ENCODE measurements at regions of chr7 and their contacts with region 1.

Region 1: DNA sequence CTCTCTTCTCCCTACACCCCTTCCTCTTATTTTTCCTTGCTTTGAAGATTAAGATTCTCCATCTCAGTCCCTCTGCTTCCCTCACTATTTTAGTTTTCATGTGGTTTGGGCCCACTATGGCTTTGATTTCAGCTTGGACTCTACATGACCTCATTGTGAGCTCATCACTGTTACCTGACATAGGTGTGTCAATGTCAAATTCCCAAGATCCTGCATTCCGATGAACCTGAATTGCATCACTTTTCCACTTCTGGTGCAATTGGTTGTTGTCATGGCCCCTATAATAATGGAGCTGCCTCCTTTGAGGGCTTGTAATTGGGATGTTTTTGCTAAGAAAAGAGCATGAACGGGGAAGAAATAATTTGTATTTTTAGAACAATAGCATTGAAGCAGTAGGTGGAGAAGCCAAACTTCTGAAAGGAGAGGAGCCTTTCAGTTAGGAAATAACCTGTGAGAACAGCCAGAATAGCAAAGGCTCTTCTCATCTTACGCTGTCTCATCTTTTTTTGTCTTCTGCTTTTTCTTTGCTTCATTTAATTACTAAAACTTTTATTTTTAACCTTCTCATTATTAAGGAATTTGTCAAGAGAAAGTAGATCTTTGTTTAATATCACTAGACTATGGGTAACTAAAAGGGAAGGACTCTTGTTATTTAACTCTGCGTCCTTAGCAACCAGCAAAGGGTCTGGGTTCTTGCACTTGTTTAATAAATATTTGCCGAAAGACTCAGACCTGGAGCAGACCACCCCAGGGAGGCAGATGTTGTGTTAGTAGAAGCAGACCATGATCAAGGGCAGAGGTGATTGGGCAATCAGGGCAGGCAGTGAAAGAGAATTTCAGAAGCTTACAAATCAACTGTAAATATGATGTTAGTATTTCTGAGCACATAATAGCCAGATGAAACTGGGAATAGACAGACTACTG is 95.4 kb downstream of the TES start:
- DNase-seq: no peak
- ATAC-seq: no peak
- H3K4me3 ChIP-seq: no peak overlapping the region
- H3K4me3 Mint-ChIP-seq: no peak overlapping the region
- H3K27ac ChIP-seq: no peak overlapping the region
- H3K27ac Mint-ChIP-seq: no peak overlapping the region
- H3K4me1 ChIP-seq: no peaks in the 10 kb centered on the region
- H3K4me1 Mint-ChIP-seq: no peaks in the 10 kb centered on the region
- H3K27me3 ChIP-seq: peaks cover 0 to 4% (median 0%) of the 10 kb centered on the region in 4 experiments
- H3K27me3 Mint-ChIP-seq: peaks cover 4% of the 10 kb centered on the region
- CTCF ChIP-seq: no peak

Region 2: GRCh38 chr7:116087291-116087690 is 218.5 kb before region 1 on chr7:
- CTCF ChIA-PET with region 1: no interaction called
- POLR2A ChIA-PET with region 1: no interaction called
- intact Hi-C with region 1: no loop called
- DNase-seq: no peak
- ATAC-seq: no peak
- H3K4me3 ChIP-seq: no peak overlapping the region
- H3K4me3 Mint-ChIP-seq: no peak overlapping the region
- H3K27ac ChIP-seq: no peak overlapping the region
- H3K27ac Mint-ChIP-seq: no peak overlapping the region
- H3K4me1 ChIP-seq: no peaks in the 10 kb centered on the region
- H3K4me1 Mint-ChIP-seq: no peaks in the 10 kb centered on the region
- H3K27me3 ChIP-seq: no peaks in the 10 kb centered on the region
- H3K27me3 Mint-ChIP-seq: no peaks in the 10 kb centered on the region
- CTCF ChIP-seq: no peak

Region 3: GRCh38 chr7:116101704-116102103 is 204.0 kb before region 1 on chr7:
- CTCF ChIA-PET with region 1: no interaction called
- POLR2A ChIA-PET with region 1: no interaction called
- intact Hi-C with region 1: no loop called
- DNase-seq: no peak
- ATAC-seq: no peak
- H3K4me3 ChIP-seq: no peak overlapping the region
- H3K4me3 Mint-ChIP-seq: no peak overlapping the region
- H3K27ac ChIP-seq: no peak overlapping the region
- H3K27ac Mint-ChIP-seq: no peak overlapping the region
- H3K4me1 ChIP-seq: no peaks in the 10 kb centered on the region
- H3K4me1 Mint-ChIP-seq: no peaks in the 10 kb centered on the region
- H3K27me3 ChIP-seq: no peaks in the 10 kb centered on the region
- H3K27me3 Mint-ChIP-seq: no peaks in the 10 kb centered on the region
- CTCF ChIP-seq: no peak

Region 4: DNA sequence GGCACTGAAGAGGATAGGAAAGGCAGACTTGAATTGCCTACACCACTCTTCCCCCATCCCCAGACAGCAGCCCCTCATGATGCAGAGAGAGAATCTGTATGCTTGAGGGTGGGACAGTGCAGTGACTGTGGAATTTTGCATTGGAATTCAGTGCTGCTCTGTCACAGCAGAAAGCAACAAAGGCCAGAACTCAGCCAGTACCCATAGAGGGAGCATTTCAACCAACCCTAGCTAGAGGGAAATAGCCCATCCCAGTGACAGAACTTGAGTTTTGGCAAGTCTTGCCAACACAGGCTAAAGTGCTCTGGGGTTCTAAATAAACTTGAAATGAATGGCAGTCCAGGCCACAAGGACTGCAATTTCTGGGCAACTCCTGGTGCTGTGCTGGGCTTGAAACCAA is 15.0 kb before region 1 on chr7:
- CTCF ChIA-PET with region 1: no interaction called
- POLR2A ChIA-PET with region 1: no interaction called
- intact Hi-C with region 1: loop called (anchors 1 kb)
- DNase-seq: no peak
- ATAC-seq: no peak
- H3K4me3 ChIP-seq: no peak overlapping the region
- H3K4me3 Mint-ChIP-seq: no peak overlapping the region
- H3K27ac ChIP-seq: no peak overlapping the region
- H3K27ac Mint-ChIP-seq: no peak overlapping the region
- H3K4me1 ChIP-seq: no peaks in the 10 kb centered on the region
- H3K4me1 Mint-ChIP-seq: no peaks in the 10 kb centered on the region
- H3K27me3 ChIP-seq: peaks cover 0 to 7% (median 0%) of the 10 kb centered on the region in 4 experiments
- H3K27me3 Mint-ChIP-seq: peaks cover 19% of the 10 kb centered on the region
- CTCF ChIP-seq: no peak

Region 5: DNA sequence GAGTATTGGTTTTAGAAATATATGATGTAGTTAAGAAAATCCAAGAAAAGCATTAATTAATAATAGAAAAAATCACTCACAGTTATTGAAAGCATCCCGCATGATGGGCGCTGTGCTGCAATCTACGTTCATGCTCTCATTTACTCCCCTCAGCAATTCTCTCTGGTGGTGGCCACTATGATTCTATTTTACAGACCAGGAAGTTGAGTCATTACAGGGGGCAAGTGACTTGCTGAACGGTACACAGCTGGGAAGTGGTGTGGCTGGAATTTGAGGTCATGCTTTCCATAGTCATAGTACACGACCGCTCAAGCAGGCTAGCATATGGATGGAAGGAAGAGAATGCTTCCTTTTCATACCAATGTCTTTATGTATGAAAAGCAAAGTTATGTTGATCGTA is 22.0 kb after region 1 on chr7:
- CTCF ChIA-PET with region 1: no interaction called
- POLR2A ChIA-PET with region 1: no interaction called
- intact Hi-C with region 1: no loop called
- DNase-seq: no peak
- ATAC-seq: no peak
- H3K4me3 ChIP-seq: no peak overlapping the region
- H3K4me3 Mint-ChIP-seq: no peak overlapping the region
- H3K27ac ChIP-seq: no peak overlapping the region
- H3K27ac Mint-ChIP-seq: no peak overlapping the region
- H3K4me1 ChIP-seq: no peaks in the 10 kb centered on the region
- H3K4me1 Mint-ChIP-seq: no peaks in the 10 kb centered on the region
- H3K27me3 ChIP-seq: no peaks in the 10 kb centered on the region
- H3K27me3 Mint-ChIP-seq: no peaks in the 10 kb centered on the region
- CTCF ChIP-seq: no peak

Measured in B cell (primary cell).